ENCODE measurements at regions of chr7 and their contacts with region 1.

Region 1: DNA sequence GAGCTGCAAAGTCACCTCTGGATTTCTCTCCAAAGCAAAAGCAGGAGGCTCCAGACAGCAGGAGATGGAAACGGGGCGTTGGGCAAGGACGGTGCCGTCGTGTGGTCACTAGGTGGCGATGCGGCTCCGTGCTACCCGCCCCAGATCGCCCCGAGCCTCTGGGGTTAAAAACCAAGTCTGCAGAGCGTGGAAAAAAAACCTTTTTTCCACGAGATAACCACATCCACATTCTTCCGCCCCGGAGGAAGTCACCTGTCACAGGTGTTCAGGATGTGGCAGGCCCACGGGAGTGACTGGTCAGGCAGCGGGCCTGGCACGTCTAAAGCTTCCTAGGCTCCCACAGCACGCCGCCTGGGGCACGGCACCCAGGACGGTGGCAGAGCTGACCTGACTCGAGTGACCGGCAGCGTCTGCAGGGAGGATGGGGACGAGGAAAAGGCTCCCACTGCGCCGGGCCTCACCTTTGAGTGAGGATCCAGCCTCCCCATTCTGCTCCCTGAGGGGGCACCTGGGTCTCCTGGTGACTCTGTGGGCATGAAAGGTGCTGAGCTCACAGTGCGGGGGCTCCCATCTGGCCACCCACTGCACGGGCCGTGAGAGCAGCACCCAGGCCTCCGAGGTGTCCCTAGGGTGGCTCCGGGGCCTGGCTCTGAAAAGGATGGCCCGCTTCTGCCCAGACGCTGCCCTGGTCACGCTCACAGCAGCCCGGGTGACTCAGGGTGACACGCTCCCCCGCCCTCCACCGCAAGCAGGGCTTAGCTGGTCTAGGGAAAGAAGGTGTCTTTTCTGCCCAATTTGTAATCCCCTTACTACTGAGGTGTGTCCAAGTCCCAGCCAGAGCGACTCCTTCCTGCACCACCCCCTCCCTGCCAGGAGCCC is 71.3 kb upstream of the TNRC18 start:
- DNase-seq: peak; percentile 68
- H3K4me3 ChIP-seq: no peak overlapping the region
- H3K27ac ChIP-seq: peak overlapping the region; percentile 76 to 85
- H3K4me1 ChIP-seq: peaks cover 11% of the 10 kb centered on the region
- H3K27me3 ChIP-seq: no peaks in the 10 kb centered on the region
- CTCF ChIP-seq: peak; percentile 84 to 95 (median 90)
- POLR2A ChIP-seq: no peak

Region 2: DNA sequence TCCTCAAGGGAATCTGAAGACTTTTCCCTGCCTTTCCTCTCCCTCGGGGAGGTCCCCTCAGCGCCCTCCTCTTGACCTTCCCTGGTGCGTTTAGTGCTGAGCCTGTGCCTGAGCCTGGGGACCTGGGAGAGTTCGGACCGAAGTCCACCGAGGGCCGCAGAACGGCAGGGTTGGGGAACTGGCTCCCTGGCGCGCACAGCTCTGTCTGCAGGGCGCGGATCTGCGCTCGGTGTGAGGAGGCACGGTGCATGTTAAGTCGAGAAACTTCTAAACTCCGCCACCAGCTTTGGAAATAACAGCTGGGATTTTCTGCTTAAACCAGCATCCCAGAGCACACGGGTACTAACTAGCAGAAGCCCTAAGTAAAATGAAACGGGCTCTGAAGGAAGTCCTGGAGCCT is 256.4 kb before region 1 on chr7:
- intact Hi-C with region 1: no loop called
- DNase-seq: no peak
- H3K4me3 ChIP-seq: no peak overlapping the region
- H3K27ac ChIP-seq: no peak overlapping the region
- H3K4me1 ChIP-seq: no peaks in the 10 kb centered on the region
- H3K27me3 ChIP-seq: no peaks in the 10 kb centered on the region
- CTCF ChIP-seq: no peak
- POLR2A ChIP-seq: no peak

Region 3: DNA sequence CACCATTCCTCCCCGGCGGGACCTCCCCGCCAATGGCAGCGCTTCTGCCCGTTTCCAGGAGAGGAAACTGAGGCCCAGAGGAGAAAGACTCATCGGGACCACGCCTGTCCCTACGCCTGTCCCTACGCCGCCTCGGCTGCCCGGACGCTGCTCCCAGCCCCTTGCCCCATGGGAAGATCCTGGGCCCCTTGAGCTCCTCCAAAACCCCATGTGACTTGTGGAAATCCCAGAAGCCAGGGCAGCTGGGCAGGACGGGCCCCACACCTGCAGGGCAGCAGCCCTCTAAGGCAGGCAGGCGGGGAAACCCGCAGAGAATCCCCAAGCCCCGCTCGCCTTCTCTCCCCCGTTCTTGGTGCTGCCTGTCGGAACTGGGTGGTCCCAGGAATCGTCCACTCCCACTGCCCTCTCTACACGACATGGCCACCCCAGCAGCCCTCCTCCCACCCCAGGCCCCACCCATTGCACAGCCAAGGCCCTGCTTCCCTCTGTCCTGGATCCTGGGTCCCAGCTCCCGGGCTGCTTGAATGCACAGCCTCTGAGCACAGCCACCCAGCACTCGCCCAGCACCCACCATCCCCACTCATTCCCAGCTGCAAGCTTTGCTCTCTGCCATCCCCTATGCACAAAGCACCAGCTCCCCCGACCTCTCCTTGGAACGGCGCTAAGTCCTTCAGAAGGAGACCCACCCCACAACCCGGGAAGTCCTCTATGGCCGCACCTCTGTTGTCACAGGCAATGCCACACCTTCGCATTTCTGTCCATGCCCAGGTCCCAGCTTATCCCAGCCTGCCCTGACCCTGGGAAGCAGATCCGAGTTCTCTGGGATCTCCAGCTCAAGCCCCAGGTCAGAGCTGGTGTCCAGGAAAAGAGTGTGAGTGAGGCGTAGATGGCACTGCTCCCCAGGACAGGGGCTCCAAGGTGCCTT is 161.5 kb before region 1 on chr7:
- intact Hi-C with region 1: no loop called
- DNase-seq: no peak
- H3K4me3 ChIP-seq: no peak overlapping the region
- H3K27ac ChIP-seq: no peak overlapping the region
- H3K4me1 ChIP-seq: no peaks in the 10 kb centered on the region
- H3K27me3 ChIP-seq: no peaks in the 10 kb centered on the region
- CTCF ChIP-seq: no peak
- POLR2A ChIP-seq: no peak

Region 4: DNA sequence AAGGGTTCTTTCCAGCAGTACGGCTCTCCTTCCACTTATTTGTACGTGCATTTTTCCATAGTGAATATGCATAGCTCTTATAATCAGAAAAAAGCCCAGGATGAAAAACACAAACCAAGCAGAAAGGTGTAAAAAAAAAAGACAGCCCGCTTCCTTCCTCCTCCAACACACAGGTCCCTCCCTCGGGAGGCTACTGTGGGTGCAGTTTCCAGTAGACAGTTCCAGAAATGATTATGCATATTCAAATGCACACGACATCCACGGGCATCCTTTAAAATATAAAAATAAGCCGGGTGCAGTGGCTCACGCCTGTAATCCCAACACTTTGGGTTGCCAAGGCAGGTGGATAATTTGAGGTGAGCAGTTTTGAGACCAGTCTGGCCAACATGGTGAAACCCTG is 131.2 kb before region 1 on chr7:
- intact Hi-C with region 1: loop called (anchors 10 kb)
- DNase-seq: no peak
- H3K4me3 ChIP-seq: no peak overlapping the region
- H3K27ac ChIP-seq: no peak overlapping the region
- H3K4me1 ChIP-seq: peaks cover 14% of the 10 kb centered on the region
- H3K27me3 ChIP-seq: no peaks in the 10 kb centered on the region
- CTCF ChIP-seq: no peak
- POLR2A ChIP-seq: no peak

Region 5: GRCh38 chr7:5557920-5558401 is 63.0 kb after region 1 on chr7:
- intact Hi-C with region 1: loop called (anchors 2 kb)
- DNase-seq: peak; percentile 30
- H3K4me3 ChIP-seq: no peak overlapping the region
- H3K27ac ChIP-seq: peak overlapping the region; percentile 95 to 99
- H3K4me1 ChIP-seq: peaks cover 24% of the 10 kb centered on the region
- H3K27me3 ChIP-seq: no peaks in the 10 kb centered on the region
- CTCF ChIP-seq: no peak
- POLR2A ChIP-seq: no peak

Region 6: DNA sequence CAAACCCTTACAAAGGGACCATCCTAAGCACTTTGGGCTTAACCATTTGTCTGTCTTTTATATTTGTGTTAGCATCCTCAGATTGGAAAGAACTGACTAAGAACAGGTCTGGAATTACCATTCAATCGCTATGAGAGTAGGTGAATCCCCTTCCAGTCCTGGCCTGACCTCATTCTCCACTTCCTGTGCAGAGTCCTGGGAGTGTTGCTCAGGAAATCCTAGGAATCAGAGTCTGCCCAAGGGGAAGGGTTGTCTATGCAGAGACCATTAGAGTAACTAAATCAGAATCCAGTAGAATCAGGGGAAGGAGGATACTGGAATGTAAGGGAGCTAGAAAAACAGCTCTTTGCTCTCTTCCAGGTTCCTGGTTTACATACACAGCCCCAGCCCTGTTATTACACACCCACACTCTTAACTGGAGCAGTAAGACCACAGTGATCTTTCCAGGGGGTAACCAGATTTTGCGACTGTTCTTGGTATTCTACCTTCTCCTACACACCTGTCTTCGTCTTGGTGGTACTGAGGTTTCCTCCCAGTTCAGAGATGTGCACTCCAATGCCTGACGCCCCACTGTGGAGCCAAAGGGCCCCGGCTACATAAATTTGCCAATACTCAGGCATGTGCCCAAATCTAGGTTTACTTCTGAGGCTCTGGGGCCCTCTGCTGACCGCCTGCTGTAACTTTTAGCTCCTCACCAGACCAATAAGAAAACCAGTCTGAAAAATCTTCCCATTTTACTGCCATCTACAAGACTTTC is 182.8 kb after region 1 on chr7:
- intact Hi-C with region 1: loop called (anchors 5 kb)
- DNase-seq: peak; percentile 44
- H3K4me3 ChIP-seq: no peak overlapping the region
- H3K27ac ChIP-seq: no peak overlapping the region
- H3K4me1 ChIP-seq: peaks cover 4% of the 10 kb centered on the region
- H3K27me3 ChIP-seq: no peaks in the 10 kb centered on the region
- CTCF ChIP-seq: peak; percentile 18 to 68 (median 60)
- POLR2A ChIP-seq: no peak

Region 7: DNA sequence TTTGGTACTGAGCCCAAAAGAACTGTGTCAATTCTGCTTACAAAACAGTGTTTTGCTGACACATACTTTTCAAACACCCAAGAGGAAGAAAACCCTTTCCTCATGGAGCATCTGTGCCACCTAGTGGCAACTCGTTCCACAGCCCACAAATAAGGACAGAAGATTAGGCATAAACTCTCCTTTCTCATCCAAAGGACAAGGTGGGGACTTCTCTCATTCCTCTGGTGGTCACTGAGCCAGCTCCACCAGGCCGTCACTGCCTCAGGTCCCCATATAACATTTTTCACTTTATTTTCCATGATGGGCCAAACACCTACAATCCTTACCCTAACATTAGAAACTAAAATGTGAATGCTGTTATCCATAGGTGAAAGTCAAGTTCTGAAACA is 209.6 kb after region 1 on chr7:
- intact Hi-C with region 1: loop called (anchors 2 kb)
- DNase-seq: peak; percentile 80
- H3K4me3 ChIP-seq: no peak overlapping the region
- H3K27ac ChIP-seq: peak overlapping the region in 1 of 2 donors; percentile 53
- H3K4me1 ChIP-seq: no peaks in the 10 kb centered on the region
- H3K27me3 ChIP-seq: no peaks in the 10 kb centered on the region
- CTCF ChIP-seq: peak; percentile 66 to 95 (median 90)
- POLR2A ChIP-seq: no peak

Measured in prostate gland (tissue), 2 donors.